ENCODE measurements at regions of chr20 and their contacts with region 1.

Region 1: DNA sequence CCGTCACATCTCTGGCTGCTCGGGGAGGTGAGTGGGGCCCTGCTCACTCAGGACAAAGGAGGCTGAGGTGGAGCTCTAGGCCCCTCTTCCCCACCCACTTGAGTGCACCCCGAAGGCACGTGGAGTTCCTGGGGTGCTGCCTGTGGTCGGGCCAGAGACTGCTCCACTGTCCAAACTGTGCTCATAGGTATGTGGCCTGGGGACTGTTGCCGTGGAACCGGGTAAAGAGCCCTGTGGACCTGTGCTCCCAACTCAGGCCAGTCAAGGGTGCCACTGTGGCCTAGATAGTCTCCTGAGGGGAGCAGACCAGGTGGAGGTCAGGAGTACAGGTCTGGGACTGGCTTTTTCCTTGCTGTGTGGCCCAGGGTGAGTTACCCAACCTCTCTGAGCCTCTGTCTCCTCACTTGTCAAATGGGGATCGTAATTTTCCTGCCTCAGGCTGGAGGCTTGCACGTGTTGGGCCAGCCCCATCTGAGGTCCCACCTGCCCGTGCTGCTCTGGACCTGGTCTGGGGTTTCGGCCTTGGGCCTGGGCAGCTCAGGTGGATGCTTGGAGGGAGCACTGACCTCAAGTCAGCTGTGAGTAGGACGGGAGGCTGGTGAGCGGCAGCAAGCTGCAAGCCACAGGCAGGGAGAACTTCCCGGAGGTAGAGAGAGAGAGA is 12.4 kb upstream of the NPBWR2 start:
- DNase-seq: no peak
- ATAC-seq: peak; percentile 5
- H3K4me3 Mint-ChIP-seq: peak overlapping the region; percentile 71
- H3K27ac Mint-ChIP-seq: peak overlapping the region; percentile 78
- H3K4me1 Mint-ChIP-seq: peaks cover 8% of the 10 kb centered on the region
- H3K27me3 Mint-ChIP-seq: peaks cover 5% of the 10 kb centered on the region
- CTCF ChIP-seq: no peak

Region 2: DNA sequence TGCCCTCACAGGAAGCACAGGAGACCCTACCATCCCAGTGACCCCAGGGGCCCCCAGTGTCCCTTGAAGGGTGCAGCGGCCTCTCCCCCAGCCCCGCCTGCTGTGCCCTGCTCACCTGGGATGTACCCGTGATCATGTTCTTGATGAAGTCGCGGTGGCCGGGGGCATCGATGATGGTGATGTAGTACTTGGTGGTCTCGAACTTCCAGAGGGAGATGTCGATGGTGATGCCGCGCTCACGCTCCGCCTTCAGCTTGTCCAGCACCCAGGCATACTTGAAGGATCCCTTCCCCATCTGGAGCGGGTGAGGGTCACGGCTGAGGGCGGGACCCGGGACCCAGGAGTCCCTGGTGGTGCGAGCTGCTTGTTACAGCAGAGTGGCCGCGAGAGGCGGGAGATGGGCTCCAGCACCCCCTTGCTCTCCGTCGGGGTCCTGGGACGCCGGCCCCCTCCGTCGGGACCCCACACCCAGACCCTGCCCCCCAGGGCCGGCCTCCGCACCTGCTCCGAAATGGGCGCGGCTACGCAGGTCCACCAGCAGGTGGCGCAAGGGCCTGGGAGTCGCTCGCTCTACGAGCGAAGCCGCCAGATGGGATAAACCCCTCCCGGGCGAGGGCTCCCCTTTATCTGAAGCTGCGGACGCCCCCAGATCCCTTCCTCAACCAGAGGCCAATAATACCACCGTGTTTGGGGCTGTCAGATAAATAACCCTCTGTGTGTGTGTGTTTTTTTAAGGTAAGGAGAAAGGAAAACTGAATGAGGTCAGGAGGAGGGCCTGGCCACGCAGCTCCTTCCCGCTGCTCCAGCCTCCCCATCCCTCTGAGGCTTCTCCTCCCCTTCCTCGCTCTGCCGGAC is 623.8 kb before region 1 on chr20:
- CTCF ChIA-PET with region 1: interaction called, 3 read pairs
- POLR2A ChIA-PET with region 1: interaction called, 14 read pairs
- intact Hi-C with region 1: loop called (anchors 5 kb)
- DNase-seq: peak; percentile 73
- ATAC-seq: peak; percentile 74
- H3K4me3 Mint-ChIP-seq: peak overlapping the region; percentile 59
- H3K27ac Mint-ChIP-seq: no peak overlapping the region
- H3K4me1 Mint-ChIP-seq: peaks cover 4% of the 10 kb centered on the region
- H3K27me3 Mint-ChIP-seq: peaks cover 9% of the 10 kb centered on the region
- CTCF ChIP-seq: peak; percentile 58

Region 3: GRCh38 chr20:63782051-63782471 is 337.8 kb before region 1 on chr20:
- CTCF ChIA-PET with region 1: interaction called, 4 read pairs
- POLR2A ChIA-PET with region 1: no interaction called
- intact Hi-C with region 1: loop called (anchors 5 kb)
- DNase-seq: no peak
- ATAC-seq: peak; percentile 33
- H3K4me3 Mint-ChIP-seq: no peak overlapping the region
- H3K27ac Mint-ChIP-seq: no peak overlapping the region
- H3K4me1 Mint-ChIP-seq: peaks cover 6% of the 10 kb centered on the region
- H3K27me3 Mint-ChIP-seq: no peaks in the 10 kb centered on the region
- CTCF ChIP-seq: no peak

Region 4: DNA sequence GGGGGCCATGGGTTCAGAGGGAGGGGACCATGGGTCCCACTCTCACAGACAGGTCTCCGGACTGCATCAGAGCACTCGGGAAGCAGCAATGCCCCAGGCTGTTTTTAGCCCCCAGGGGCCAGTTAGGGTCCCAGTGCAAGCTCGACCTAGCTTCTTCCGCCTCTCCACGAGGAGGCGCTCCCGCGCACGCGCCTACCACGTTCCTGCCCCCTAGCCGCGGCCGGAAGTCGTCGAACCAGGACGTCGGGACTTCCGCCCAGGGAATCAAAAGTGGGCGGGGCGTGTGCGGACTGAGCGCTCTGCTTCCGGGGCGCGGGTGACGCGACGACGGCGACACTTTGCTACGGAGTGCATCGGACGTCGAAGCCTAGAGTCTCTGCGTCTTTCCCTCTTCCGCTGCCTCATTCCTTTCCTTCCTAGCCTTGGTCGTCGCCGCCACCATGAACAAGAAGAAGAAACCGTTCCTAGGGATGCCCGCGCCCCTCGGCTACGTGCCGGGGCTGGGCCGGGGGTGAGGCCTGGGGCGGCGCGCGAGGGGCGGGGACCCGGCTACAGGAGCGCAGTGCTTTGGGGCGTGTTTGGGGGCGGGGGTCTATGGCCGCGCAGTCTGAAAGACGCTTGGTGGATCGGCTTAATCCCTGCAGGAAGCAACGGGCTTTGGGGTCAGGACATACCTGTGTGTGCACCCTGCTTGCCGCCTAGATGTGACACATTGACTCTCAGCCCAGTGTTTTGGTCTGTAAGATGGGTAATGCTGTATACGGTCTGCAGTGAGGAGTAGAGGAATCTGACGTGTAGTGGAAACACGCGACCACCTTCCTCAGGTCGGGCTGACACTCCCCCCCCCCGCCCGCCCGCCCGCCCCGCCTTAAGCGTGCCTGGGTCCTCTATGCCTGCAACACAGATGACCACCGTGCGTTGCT is 138.7 kb before region 1 on chr20 and contains the start of gene PRPF6:
- CTCF ChIA-PET with region 1: interaction called, 19 read pairs
- POLR2A ChIA-PET with region 1: interaction called, 3 read pairs
- intact Hi-C with region 1: loop called (anchors 1 kb)
- DNase-seq: peak; percentile 90
- ATAC-seq: peak; percentile 65
- H3K4me3 Mint-ChIP-seq: peak within 1 kb of the TSS; percentile 92
- H3K27ac Mint-ChIP-seq: peak within 1 kb of the TSS; percentile 94
- H3K4me1 Mint-ChIP-seq: peaks cover 50% of the 10 kb centered on the region
- H3K27me3 Mint-ChIP-seq: no peaks in the 10 kb centered on the region
- CTCF ChIP-seq: peak; percentile 25
- total RNA-seq, gene PRPF6: 75.7 and 75.8 TPM in 2 replicates

Region 5: GRCh38 chr20:64101731-64102621 is 17.8 kb before region 1 on chr20:
- CTCF ChIA-PET with region 1: interaction called, 13 read pairs
- POLR2A ChIA-PET with region 1: interaction called, 3 read pairs
- intact Hi-C with region 1: loop called (anchors 1 kb)
- DNase-seq: peak; percentile 81
- ATAC-seq: peak; percentile 42
- H3K4me3 Mint-ChIP-seq: peak overlapping the region; percentile 82
- H3K27ac Mint-ChIP-seq: no peak overlapping the region
- H3K4me1 Mint-ChIP-seq: peaks cover 32% of the 10 kb centered on the region
- H3K27me3 Mint-ChIP-seq: peaks cover 5% of the 10 kb centered on the region
- CTCF ChIP-seq: no peak